OCI-LY7 (cell line): ENCODE measurements at regions of chr4 and their contacts with region 1.

Region 1: GRCh38 chr4:1346781-1347409 is at the start of gene UVSSA:
- DNase-seq: peak; percentile 99
- H3K4me3 ChIP-seq: peak within 1 kb of the TSS; percentile 97
- H3K27ac ChIP-seq: peak within 1 kb of the TSS; percentile 61
- H3K4me1 ChIP-seq: peaks cover 29% of the 10 kb centered on the region
- CTCF ChIP-seq: no peak
- total RNA-seq, gene UVSSA: 13.2 and 17.9 TPM in 2 replicates

Region 2: GRCh38 chr4:683982-684622 is 662.8 kb before region 1 on chr4:
- CTCF ChIA-PET with region 1: no interaction called
- POLR2A ChIA-PET with region 1: no interaction called
- intact Hi-C with region 1: no loop called
- DNase-seq: peak; percentile 61
- H3K4me3 ChIP-seq: no peak overlapping the region
- H3K27ac ChIP-seq: no peak overlapping the region
- H3K4me1 ChIP-seq: no peaks in the 10 kb centered on the region
- CTCF ChIP-seq: peak; percentile 79

Region 3: GRCh38 chr4:1130316-1131186 is 216.3 kb before region 1 on chr4:
- CTCF ChIA-PET with region 1: no interaction called
- POLR2A ChIA-PET with region 1: no interaction called
- intact Hi-C with region 1: loop called (anchors 1 kb)
- DNase-seq: peak; percentile 82
- H3K4me3 ChIP-seq: no peak overlapping the region
- H3K27ac ChIP-seq: no peak overlapping the region
- H3K4me1 ChIP-seq: no peaks in the 10 kb centered on the region
- CTCF ChIP-seq: peak; percentile 100

Region 4: GRCh38 chr4:1218634-1219565 is 128.0 kb before region 1 on chr4:
- CTCF ChIA-PET with region 1: no interaction called
- POLR2A ChIA-PET with region 1: no interaction called
- intact Hi-C with region 1: loop called (anchors 1 kb)
- DNase-seq: peak; percentile 86
- H3K4me3 ChIP-seq: peak overlapping the region; percentile 62
- H3K27ac ChIP-seq: peak overlapping the region; percentile 99
- H3K4me1 ChIP-seq: peaks cover 77% of the 10 kb centered on the region
- CTCF ChIP-seq: no peak

Region 5: GRCh38 chr4:1266881-1267763 is 79.8 kb before region 1 on chr4:
- CTCF ChIA-PET with region 1: interaction called, 3 read pairs
- POLR2A ChIA-PET with region 1: no interaction called
- intact Hi-C with region 1: loop called (anchors 5 kb)
- DNase-seq: no peak
- H3K4me3 ChIP-seq: peak overlapping the region; percentile 61
- H3K27ac ChIP-seq: peak overlapping the region; percentile 68
- H3K4me1 ChIP-seq: peaks cover 14% of the 10 kb centered on the region
- CTCF ChIP-seq: no peak

Region 6: DNA sequence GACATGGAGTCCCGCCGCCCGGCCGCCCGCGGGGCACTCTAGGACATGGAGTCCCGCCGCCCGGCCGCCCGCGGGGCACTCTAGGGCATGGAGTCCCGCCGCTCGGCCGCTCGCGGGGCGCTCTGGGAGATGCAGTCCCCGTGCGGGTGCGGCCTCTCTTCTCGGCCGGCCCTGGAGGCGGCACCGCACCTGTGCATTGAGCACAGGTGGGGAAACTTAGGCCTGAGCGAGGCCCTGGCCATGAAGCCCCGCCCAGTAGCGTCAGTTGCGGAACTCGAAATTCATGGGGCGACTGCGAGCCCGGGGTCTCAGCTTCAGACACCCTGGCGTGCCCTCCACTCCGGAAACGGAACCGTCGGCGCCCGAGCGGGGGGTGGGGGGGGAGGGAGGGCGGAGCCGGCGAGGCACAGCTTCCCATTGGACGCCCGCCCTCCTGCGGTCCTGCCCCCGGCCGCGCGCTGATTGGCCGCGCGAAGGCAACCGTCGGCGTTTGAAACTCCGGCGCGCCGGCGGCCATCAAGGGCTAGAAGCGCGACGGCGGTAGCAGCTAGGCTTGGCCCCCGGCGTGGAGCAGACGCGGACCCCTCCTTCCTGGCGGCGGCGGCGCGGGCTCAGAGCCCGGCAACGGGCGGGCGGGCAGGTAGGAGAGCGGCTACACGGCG is 374.2 kb after region 1 on chr4 and contains the starts of genes TACC3 and TMEM129:
- CTCF ChIA-PET with region 1: no interaction called
- POLR2A ChIA-PET with region 1: no interaction called
- intact Hi-C with region 1: loop called (anchors 2 kb)
- DNase-seq: peak; percentile 98
- H3K4me3 ChIP-seq: peak within 1 kb of the TSS; percentile 94
- H3K27ac ChIP-seq: peak within 1 kb of the TSS; percentile 90
- H3K4me1 ChIP-seq: peaks cover 75% of the 10 kb centered on the region
- CTCF ChIP-seq: no peak
- total RNA-seq, gene TACC3: 100 and 130 TPM in 2 replicates
- total RNA-seq, gene TMEM129: 35.1 and 44.0 TPM in 2 replicates